HCT116 (cell line): ENCODE measurements at regions of chr1 and their contacts with region 1.

Region 1: DNA sequence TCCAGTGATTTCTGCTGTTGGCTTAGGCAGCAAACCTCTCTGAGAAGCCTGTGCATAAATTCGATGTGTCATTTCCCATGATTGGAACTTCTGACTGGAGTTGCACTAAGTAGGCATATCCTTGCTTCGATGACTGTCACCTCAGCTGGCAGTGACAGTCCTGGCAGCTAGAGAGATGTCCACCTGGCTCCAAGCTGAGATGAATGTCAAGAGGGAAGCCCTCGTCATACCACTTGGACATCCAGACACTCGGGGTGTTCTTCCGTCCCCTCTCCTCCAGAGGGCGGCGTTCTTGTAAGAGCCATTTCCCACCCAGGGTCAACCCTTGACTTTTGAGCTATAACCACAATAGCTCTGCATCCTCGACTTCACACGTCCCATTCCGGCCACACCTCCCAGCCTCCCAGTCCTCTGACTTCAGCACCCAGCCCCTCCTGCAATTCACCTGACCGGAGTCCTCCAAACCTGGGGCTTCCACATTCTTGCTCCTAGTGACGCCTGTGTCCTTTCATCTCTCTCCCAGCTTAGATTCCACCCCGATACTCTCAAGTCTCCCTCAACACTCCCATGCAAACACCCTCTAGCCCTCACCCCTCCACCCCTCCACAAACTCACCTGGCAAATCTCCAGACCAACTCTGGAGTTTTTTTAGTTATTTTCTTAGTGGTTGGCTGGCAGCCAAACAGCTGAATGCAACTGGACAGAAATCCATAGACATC is 17.3 kb downstream of the CA6 start:
- DNase-seq: peak; percentile 68
- ATAC-seq: peak; percentile 98
- H3K4me3 ChIP-seq: no peak overlapping the region
- H3K27ac ChIP-seq: no peak overlapping the region
- H3K4me1 ChIP-seq: peaks cover 0 to 13% of the 10 kb centered on the region in 2 experiments; a peak in 2 of 4 replicates
- H3K27me3 ChIP-seq: no peaks in the 10 kb centered on the region
- CTCF ChIP-seq: peak; percentile 52 to 81 (median 71)
- POLR2A ChIP-seq: no peak
- RAD21 ChIP-seq: peak; percentile 52

Region 2: DNA sequence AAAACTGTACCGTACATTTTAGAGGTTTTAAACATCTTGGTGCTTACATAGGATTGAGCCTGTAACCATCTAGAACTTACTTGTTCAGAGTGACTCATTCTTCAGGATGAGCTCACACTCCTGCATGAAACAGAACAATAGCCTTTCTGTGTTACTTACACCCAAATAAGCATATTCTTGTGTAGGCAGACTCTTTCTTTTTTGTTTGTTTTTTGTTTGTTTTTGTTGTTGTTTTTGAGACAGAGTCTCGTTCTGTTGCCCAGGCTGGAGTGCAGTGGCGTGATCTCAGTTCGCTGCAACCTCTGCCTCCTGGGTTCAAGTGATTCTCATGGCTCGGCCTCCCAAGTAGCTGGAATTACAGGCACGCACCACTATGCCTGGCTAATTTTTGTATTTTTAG is 21.1 kb before region 1 on chr1:
- CTCF ChIA-PET with region 1: interaction called, 19 read pairs
- POLR2A ChIA-PET with region 1: interaction called, 3 read pairs
- RAD21 ChIA-PET with region 1: no interaction called
- intact Hi-C with region 1: no loop called
- DNase-seq: peak; percentile 40
- ATAC-seq: peak; percentile 85
- H3K4me3 ChIP-seq: no peak overlapping the region
- H3K27ac ChIP-seq: no peak overlapping the region
- H3K4me1 ChIP-seq: peaks cover 0 to 21% of the 10 kb centered on the region in 2 experiments; a peak in 2 of 4 replicates
- H3K27me3 ChIP-seq: no peaks in the 10 kb centered on the region
- CTCF ChIP-seq: no peak
- POLR2A ChIP-seq: no peak
- RAD21 ChIP-seq: no peak

Region 3: DNA sequence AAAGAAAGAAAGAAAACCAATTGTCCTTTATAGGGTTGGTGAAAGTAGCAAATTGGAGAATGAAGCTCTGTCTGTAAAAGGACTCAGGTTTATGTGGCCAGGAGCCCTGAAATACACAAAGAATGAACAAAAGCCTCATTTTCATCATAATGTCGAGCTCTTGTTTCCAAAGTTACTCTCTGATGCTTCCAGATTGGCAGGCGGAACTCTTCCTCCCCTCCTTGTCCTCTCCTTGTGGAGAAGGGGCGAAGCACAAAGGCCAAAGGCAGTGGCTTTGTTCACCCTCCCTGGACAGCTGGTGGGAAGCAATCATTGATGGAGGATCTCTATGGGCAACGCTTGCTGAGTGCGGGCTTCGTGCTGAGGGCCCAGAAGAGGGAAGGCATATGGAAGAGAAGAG is 11.7 kb before region 1 on chr1:
- CTCF ChIA-PET with region 1: interaction called, 12 read pairs
- POLR2A ChIA-PET with region 1: no interaction called
- RAD21 ChIA-PET with region 1: no interaction called
- intact Hi-C with region 1: no loop called
- DNase-seq: no peak
- ATAC-seq: no peak
- H3K4me3 ChIP-seq: no peak overlapping the region
- H3K27ac ChIP-seq: no peak overlapping the region
- H3K4me1 ChIP-seq: no peaks in the 10 kb centered on the region
- H3K27me3 ChIP-seq: no peaks in the 10 kb centered on the region
- CTCF ChIP-seq: no peak
- POLR2A ChIP-seq: no peak
- RAD21 ChIP-seq: no peak

Region 4: DNA sequence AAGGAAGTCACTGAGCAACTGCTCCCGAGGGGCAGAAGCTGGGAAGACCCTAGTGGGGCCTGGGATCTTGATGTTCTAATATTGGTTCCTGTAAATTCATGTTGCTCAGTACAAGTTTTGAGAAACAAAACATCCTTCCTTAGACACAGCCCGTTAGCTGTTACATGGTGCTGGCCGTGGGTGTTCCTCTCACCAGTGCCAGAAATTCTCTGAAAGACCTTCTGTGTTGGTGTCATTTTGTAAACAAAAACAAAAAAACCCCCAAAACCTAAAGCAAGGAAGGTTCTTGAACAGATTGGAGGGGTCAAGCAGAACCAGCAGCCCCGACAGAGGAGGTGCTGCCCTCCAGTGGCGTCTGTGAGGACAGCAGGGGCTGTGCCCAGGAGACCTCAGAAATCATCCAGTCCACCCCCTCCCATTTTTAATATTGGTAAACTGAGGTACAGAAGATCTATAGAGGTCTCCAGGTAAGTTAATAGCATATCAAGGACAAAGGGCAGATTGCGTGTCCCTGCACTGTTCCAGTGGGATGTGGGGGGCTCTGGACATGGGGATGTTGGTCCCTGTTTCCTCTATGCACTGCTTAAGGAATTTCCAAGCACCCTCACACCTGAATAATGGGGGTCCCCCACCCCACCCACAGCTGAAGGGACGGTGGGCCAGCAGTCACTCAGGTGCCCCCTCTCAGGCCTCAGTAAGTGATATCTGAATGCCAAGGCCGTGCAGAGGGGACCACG is 25.1 kb after region 1 on chr1:
- CTCF ChIA-PET with region 1: interaction called, 18 read pairs
- POLR2A ChIA-PET with region 1: interaction called, 4 read pairs
- RAD21 ChIA-PET with region 1: no interaction called
- intact Hi-C with region 1: no loop called
- DNase-seq: no peak
- ATAC-seq: peak; percentile 82
- H3K4me3 ChIP-seq: no peak overlapping the region
- H3K27ac ChIP-seq: no peak overlapping the region
- H3K4me1 ChIP-seq: peaks cover 13 to 35% of the 10 kb centered on the region in 2 experiments
- H3K27me3 ChIP-seq: no peaks in the 10 kb centered on the region
- CTCF ChIP-seq: peak; percentile 81 to 98 (median 91)
- POLR2A ChIP-seq: no peak
- RAD21 ChIP-seq: peak; percentile 85

Region 5: GRCh38 chr1:9129266-9130041 is 166.5 kb after region 1 on chr1:
- CTCF ChIA-PET with region 1: no interaction called
- POLR2A ChIA-PET with region 1: no interaction called
- RAD21 ChIA-PET with region 1: no interaction called
- intact Hi-C with region 1: no loop called
- DNase-seq: peak; percentile 69
- ATAC-seq: peak; percentile 79
- H3K4me3 ChIP-seq: peak overlapping the region; percentile 5 to 18; a peak in 1 of 4 replicates
- H3K27ac ChIP-seq: peak overlapping the region; percentile 42
- H3K4me1 ChIP-seq: peaks cover 12 to 33% of the 10 kb centered on the region in 2 experiments
- H3K27me3 ChIP-seq: no peaks in the 10 kb centered on the region
- CTCF ChIP-seq: no peak
- POLR2A ChIP-seq: no peak
- RAD21 ChIP-seq: no peak